Heart left ventricle (tissue), 16 donors: ENCODE measurements at regions of chr17 and their contacts with region 1.

Region 1: GRCh38 chr17:794876-795275 is 12.7 kb downstream of the MRM3 start:
- DNase-seq: peak; percentile 85 to 91 (median 88)
- ATAC-seq: peak; percentile 47 to 81 (median 63)
- H3K4me3 ChIP-seq: peak overlapping the region in 11 of 12 donors; percentile 14 to 55 (median 43)
- H3K27ac ChIP-seq: peak overlapping the region in 10 of 12 donors; percentile 4 to 74 (median 51)
- H3K4me1 ChIP-seq: peaks cover 0 to 30% (median 10%) of the 10 kb centered on the region in 12 donors
- H3K27me3 ChIP-seq: no peaks in the 10 kb centered on the region
- CTCF ChIP-seq: peak; percentile 73 to 97 (median 89)
- POLR2A ChIP-seq: no peak

Region 2: DNA sequence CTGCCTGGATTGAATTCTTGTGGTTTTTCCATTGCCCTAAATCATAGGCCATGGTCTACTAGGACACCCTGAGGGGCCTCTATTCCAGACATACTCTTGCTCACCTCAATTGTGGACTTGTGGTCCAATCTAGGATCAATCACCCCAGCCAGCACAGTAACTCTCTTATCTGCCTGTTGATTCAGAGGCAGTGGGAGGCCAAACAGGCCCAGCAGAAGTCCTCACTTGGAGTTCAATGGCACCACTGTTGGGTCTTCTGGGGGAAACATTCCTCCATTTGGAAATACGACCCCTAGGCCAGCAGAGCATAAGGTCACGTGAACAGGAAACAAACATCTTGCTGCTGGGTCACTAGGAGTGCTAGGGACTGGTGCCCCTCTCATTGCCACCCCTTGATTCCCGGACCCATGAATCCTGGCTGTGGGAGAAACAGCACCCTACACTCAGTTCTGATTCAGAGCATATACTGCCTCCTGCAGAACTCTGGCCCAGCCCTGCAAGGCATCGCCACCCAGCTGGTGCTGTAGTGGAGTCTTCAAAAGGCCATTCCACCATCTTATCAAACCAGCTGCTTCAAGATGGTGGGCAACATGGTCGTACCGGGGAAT is 191.6 kb after region 1 on chr17:
- intact Hi-C with region 1: loop called in 8 of 10 experiments (anchors 1 to 2 kb)
- DNase-seq: peak in 1 of 5 donors; percentile 21
- ATAC-seq: peak in 1 of 4 donors; percentile 24
- H3K4me3 ChIP-seq: no peak overlapping the region
- H3K27ac ChIP-seq: no peak overlapping the region
- H3K4me1 ChIP-seq: peaks cover 0 to under 1% (median 0%) of the 10 kb centered on the region in 12 donors
- H3K27me3 ChIP-seq: no peaks in the 10 kb centered on the region
- CTCF ChIP-seq: no peak
- POLR2A ChIP-seq: no peak